SK-N-SH (cell line): ENCODE measurements at regions of chr9 and their contacts with region 1.

Region 1: GRCh38 chr9:133532937-133533668 is 1.4 kb upstream of the ADAMTSL2 start:
- DNase-seq: peak; percentile 77
- H3K4me3 ChIP-seq: no peak overlapping the region; a peak in 2 of 4 replicates
- H3K27ac ChIP-seq: peak overlapping the region in 1 of 2 experiments; percentile 100; a peak in 2 of 4 replicates
- H3K4me1 ChIP-seq: peaks cover 0 to 90% of the 10 kb centered on the region in 2 experiments; a peak in 3 of 4 replicates
- H3K27me3 ChIP-seq: no peaks in the 10 kb centered on the region
- CTCF ChIP-seq: peak; percentile 66
- EP300 ChIP-seq: no peak
- RAD21 ChIP-seq: peak; percentile 83

Region 2: GRCh38 chr9:133163504-133164172 is 369.5 kb before region 1 on chr9 and contains the start of gene GBGT1:
- CTCF ChIA-PET with region 1: no interaction called
- POLR2A ChIA-PET with region 1: no interaction called
- DNase-seq: peak; percentile 90
- H3K4me3 ChIP-seq: peak within 1 kb of the TSS in 1 of 2 experiments; percentile 42; a peak in 3 of 4 replicates
- H3K27ac ChIP-seq: no peak within 1 kb of the TSS
- H3K4me1 ChIP-seq: peaks cover 0 to 5% of the 10 kb centered on the region in 2 experiments; a peak in 1 of 4 replicates
- H3K27me3 ChIP-seq: no peaks in the 10 kb centered on the region
- CTCF ChIP-seq: no peak
- EP300 ChIP-seq: no peak
- RAD21 ChIP-seq: no peak
- polyA plus RNA-seq, gene GBGT1: 0.45 and 0.51 TPM in 2 replicates

Region 3: GRCh38 chr9:133514460-133515238 is 18.5 kb before region 1 on chr9:
- CTCF ChIA-PET with region 1: interaction called, 12 read pairs
- POLR2A ChIA-PET with region 1: interaction called, 37 read pairs
- DNase-seq: peak; percentile 85
- H3K4me3 ChIP-seq: peak overlapping the region in 1 of 2 experiments; percentile 22; a peak in 1 of 4 replicates
- H3K27ac ChIP-seq: peak overlapping the region in 1 of 2 experiments; percentile 99; a peak in 2 of 4 replicates
- H3K4me1 ChIP-seq: peaks cover 0 to 70% of the 10 kb centered on the region in 2 experiments; a peak in 2 of 4 replicates
- H3K27me3 ChIP-seq: no peaks in the 10 kb centered on the region
- CTCF ChIP-seq: no peak
- EP300 ChIP-seq: no peak
- RAD21 ChIP-seq: no peak

Region 4: DNA sequence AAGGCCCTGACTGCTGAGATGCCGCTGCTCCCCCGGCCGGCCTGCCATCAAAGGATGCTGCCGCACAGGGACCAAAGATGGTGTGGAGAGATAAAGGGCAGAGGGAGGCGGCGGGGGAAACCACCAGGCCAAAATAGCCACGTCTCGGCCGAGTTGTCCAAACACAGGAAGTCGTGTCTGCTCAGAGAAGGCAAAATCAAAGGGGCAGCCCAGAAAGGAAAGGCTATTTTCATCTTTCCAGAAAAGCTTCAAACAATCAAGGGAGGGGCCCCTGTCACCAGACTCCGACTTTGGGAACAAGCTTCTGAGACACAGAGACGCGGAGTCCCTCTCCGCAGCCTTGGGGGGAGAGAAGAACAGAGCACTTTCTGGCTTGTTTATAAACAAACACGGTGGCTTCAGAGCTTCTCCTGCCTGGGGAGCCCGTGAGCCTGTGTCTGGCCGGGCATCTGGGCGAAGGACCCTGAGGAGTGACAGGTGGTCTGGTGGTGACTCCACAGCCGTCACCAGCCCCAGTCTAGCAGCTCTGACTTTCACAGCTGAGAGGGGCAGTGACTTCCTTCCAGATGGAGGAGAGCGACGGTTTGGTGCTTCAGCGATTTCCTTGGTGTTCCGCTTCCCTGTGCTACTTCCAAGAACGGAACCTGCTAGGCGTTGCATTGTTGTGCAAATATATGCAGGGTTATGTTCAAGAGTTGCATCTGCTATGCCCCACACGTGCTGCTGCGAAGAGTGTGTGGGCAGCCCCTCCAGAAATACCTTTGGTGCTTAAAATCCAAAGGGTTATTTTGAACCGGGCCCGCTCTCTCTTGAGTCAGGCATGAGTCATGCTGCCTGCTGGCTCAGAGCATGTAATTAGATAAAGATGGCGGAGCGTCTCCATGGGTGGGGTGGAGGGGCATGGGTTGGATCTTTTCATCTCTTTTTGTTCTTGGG is 25.4 kb after region 1 on chr9:
- CTCF ChIA-PET with region 1: interaction called, 10 read pairs
- POLR2A ChIA-PET with region 1: interaction called, 12 read pairs
- DNase-seq: peak; percentile 91
- H3K4me3 ChIP-seq: 0 out of 4 replicates have a peak overlapping the region, but pooled peaks of 1 of the 2 experiments have one; percentile 17
- H3K27ac ChIP-seq: peak overlapping the region; percentile 76 to 96
- H3K4me1 ChIP-seq: peaks cover 16 to 62% of the 10 kb centered on the region in 2 experiments
- H3K27me3 ChIP-seq: no peaks in the 10 kb centered on the region
- CTCF ChIP-seq: no peak
- EP300 ChIP-seq: peak in 1 of 2 experiments; percentile 17; a peak in 2 of 4 replicates
- RAD21 ChIP-seq: peak; percentile 10; the same call in 1 of the 2 replicates

Region 5: GRCh38 chr9:133581513-133582343 is 48.6 kb after region 1 on chr9:
- CTCF ChIA-PET with region 1: interaction called, 51 read pairs
- POLR2A ChIA-PET with region 1: interaction called, 20 read pairs
- DNase-seq: peak; percentile 89
- H3K4me3 ChIP-seq: no peak overlapping the region
- H3K27ac ChIP-seq: peak overlapping the region in 1 of 2 experiments; percentile 100; a peak in 2 of 4 replicates
- H3K4me1 ChIP-seq: peaks cover 0 to 87% of the 10 kb centered on the region in 2 experiments; a peak in 3 of 4 replicates
- H3K27me3 ChIP-seq: peaks cover 16% of the 10 kb centered on the region
- CTCF ChIP-seq: no peak
- EP300 ChIP-seq: peak in 1 of 2 experiments; percentile 83; a peak in 2 of 4 replicates
- RAD21 ChIP-seq: peak; percentile 20

Region 6: DNA sequence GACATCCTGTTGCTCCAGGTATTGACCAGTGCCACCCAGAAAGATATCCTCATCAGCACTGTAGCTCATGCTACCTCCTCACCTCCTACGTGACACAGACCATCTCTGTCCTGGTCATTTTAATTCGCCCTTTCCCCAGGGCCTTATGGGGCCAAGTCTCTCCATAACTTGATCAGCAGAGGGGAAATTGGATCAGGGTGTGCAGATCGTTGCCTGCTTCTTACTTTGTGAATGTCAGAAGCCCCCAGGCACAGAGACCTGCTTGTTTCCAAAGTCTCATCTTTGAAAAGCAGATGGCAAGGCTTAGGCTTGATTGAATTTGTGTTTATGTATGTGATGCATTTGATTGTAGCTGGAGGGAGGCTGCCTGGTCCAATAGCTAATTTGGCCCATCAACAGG is 94.2 kb after region 1 on chr9:
- CTCF ChIA-PET with region 1: interaction called, 13 read pairs
- POLR2A ChIA-PET with region 1: interaction called, 150 read pairs
- DNase-seq: peak; percentile 78
- H3K4me3 ChIP-seq: no peak overlapping the region
- H3K27ac ChIP-seq: peak overlapping the region in 1 of 2 experiments; percentile 100; a peak in 2 of 4 replicates
- H3K4me1 ChIP-seq: peaks cover 0 to 56% of the 10 kb centered on the region in 2 experiments; a peak in 1 of 4 replicates
- H3K27me3 ChIP-seq: peaks cover 4% of the 10 kb centered on the region; the same call in 1 of the 2 replicates
- CTCF ChIP-seq: no peak
- EP300 ChIP-seq: peak in 1 of 2 experiments; percentile 99; a peak in 2 of 4 replicates
- RAD21 ChIP-seq: no peak; the same call in 1 of the 2 replicates

Region 7: GRCh38 chr9:133664173-133665051 is 131.3 kb after region 1 on chr9:
- CTCF ChIA-PET with region 1: interaction called, 9 read pairs
- POLR2A ChIA-PET with region 1: interaction called, 21 read pairs
- DNase-seq: peak; percentile 68
- H3K4me3 ChIP-seq: no peak overlapping the region
- H3K27ac ChIP-seq: peak overlapping the region in 1 of 2 experiments; percentile 85; a peak in 2 of 4 replicates
- H3K4me1 ChIP-seq: peaks cover 0 to 48% of the 10 kb centered on the region in 2 experiments; a peak in 1 of 4 replicates
- H3K27me3 ChIP-seq: no peaks in the 10 kb centered on the region
- CTCF ChIP-seq: no peak
- EP300 ChIP-seq: no peak
- RAD21 ChIP-seq: peak; percentile 51

Region 8: GRCh38 chr9:133726401-133727276 is 193.5 kb after region 1 on chr9:
- CTCF ChIA-PET with region 1: interaction called, 17 read pairs
- POLR2A ChIA-PET with region 1: no interaction called
- DNase-seq: peak; percentile 86
- H3K4me3 ChIP-seq: peak overlapping the region in 1 of 2 experiments; percentile 23; a peak in 1 of 4 replicates
- H3K27ac ChIP-seq: no peak overlapping the region
- H3K4me1 ChIP-seq: peaks cover 0 to 5% of the 10 kb centered on the region in 2 experiments; a peak in 1 of 4 replicates
- H3K27me3 ChIP-seq: no peaks in the 10 kb centered on the region
- CTCF ChIP-seq: peak; percentile 67
- EP300 ChIP-seq: no peak
- RAD21 ChIP-seq: peak; percentile 86

Region 9: GRCh38 chr9:134413890-134414731 is 881.0 kb after region 1 on chr9:
- CTCF ChIA-PET with region 1: no interaction called
- POLR2A ChIA-PET with region 1: no interaction called
- DNase-seq: peak; percentile 76
- H3K4me3 ChIP-seq: no peak overlapping the region; a peak in 1 of 4 replicates
- H3K27ac ChIP-seq: peak overlapping the region in 1 of 2 experiments; percentile 81; a peak in 3 of 4 replicates
- H3K4me1 ChIP-seq: peaks cover 22 to 23% of the 10 kb centered on the region in 2 experiments; a peak in 3 of 4 replicates
- H3K27me3 ChIP-seq: no peaks in the 10 kb centered on the region
- CTCF ChIP-seq: no peak
- EP300 ChIP-seq: peak; percentile 6 to 82; a peak in 2 of 4 replicates
- RAD21 ChIP-seq: no peak